Mammary epithelial cell (primary cell): ENCODE measurements at regions of chr12 and their contacts with region 1.

Region 1: DNA sequence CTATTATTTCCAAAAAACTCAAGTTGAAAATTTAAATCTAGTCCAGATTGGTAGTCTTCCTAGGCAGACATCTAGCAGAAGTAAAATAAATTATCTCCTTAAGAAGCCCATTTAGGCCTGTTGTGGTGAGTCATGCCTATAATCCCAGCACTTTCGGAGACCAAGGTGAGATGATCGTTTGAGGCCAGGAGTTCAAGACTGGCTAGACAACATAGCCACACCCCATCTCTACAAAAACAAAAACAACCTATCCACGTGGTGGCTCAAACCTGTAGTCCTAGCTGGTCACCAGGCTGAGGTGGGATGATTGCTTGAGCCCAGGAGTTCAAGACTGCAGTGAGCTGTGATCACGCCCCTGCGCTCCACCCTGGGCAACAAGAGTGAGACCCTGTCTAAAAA is 18.8 kb downstream of the LARP4 start:
- DNase-seq: peak; percentile 46
- H3K4me3 ChIP-seq: no peak overlapping the region
- H3K27ac ChIP-seq: no peak overlapping the region
- H3K4me1 ChIP-seq: peaks cover 7% of the 10 kb centered on the region
- H3K27me3 ChIP-seq: no peaks in the 10 kb centered on the region
- CTCF ChIP-seq: no peak

Region 2: DNA sequence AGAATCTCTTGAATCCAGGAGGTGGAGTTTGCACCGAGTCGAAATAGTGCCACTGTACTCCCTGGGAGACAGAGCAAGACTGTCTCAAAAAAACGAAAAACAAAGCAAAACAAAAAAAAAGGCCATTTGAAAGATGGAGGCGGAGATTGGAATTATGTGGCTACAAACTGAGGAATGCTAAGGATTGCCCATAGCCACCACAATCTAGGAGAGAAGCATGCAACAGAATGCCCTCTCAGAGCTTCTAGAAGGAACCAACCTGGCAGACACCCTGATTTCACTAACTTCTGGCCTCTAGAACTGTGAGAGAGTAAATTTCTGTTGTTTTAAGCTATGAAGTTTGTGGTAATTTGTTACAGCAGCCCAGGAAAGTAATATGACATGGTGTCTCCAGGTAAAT is 86.1 kb before region 1 on chr12:
- CTCF ChIA-PET with region 1: no interaction called
- dilution Hi-C with region 1: loop called (anchors 5 kb)
- in situ Hi-C with region 1: no loop called
- intact Hi-C with region 1: no loop called
- DNase-seq: no peak
- H3K4me3 ChIP-seq: no peak overlapping the region
- H3K27ac ChIP-seq: no peak overlapping the region
- H3K4me1 ChIP-seq: no peaks in the 10 kb centered on the region
- H3K27me3 ChIP-seq: no peaks in the 10 kb centered on the region
- CTCF ChIP-seq: no peak

Region 3: DNA sequence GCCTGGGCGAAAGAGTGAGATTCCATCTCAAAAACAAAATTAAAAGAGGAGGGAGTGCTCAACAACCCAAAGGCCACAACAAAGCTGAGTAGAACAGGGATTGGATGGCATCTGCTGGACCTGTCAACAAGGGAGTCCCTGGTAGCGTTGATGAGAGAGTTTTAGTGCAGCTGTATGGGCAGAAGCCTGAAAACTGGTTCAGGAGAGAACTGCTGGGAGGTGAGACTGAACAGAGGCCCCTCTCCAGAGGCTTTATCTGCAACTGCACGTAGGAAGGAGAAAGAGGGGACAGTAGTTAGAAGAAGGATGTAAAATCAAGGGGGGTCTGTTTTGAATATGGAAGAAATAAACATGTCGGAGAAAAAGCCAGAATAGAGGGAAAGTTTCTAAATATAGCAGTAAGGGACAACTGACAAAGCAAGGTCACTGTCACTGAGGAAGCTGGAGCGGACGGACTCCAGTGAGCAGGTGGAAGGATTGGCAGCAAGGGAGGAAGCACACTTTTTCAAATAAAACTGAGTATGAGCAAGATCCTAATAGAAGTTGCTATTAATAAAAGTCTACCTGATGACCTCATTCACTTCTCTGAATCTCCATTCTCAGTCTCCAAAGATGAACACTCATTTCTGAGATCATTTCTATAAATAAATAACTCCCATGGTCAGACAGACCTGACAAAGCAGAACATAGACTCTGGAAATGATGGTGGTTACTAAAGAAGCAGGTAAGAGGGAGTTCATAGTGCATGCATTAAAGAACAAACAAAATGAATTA is 332.6 kb after region 1 on chr12:
- CTCF ChIA-PET with region 1: no interaction called
- dilution Hi-C with region 1: no loop called
- in situ Hi-C with region 1: no loop called
- intact Hi-C with region 1: no loop called
- DNase-seq: peak; percentile 12
- H3K4me3 ChIP-seq: no peak overlapping the region
- H3K27ac ChIP-seq: no peak overlapping the region
- H3K4me1 ChIP-seq: no peaks in the 10 kb centered on the region
- H3K27me3 ChIP-seq: no peaks in the 10 kb centered on the region
- CTCF ChIP-seq: no peak